ENCODE measurements at regions of chr5 and their contacts with region 1.

Region 1: GRCh38 chr5:150075871-150076288 is 10.5 kb downstream of the CSF1R start:
- DNase-seq: no peak
- CTCF ChIP-seq: no peak

Region 2: DNA sequence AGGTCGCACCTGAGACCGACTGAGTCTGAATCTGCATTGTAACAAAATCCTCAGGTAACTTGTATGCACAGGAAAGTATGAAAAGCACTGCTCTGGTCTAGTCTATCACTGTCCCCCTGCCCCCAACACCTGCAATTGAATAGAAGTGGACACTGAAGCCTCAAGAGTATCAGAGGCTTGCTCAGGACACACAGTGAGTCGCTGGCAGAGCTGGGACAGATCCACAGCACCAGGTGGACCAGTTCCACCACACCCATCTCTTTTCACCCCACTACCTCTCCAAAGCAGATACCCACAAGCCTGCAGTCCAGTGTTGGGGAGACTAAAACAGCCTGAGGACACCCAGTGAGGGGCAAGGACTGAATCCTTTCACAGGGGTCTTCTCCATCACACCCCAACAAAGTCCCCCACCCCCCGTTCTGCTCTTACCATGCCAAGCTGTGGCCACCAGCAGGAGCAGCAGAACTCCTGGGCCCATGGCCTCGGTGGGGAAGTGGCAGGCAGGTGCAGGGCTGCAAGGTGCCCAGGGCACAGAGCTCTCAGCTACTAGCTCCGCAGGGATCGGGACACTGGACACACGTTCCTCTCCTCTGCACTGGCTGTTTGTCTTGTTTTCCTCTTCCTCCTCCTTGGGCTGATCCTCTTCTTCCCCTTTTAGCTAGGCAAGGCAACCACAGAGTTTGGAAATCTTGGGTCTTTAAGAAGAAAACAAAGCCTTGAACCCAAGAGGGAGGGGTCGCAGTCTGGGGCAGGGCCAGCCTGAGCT is 10.3 kb after region 1 on chr5 and contains the start of gene CSF1R:
- CTCF ChIA-PET with region 1: interaction called, 10 read pairs
- POLR2A ChIA-PET with region 1: no interaction called
- DNase-seq: no peak
- CTCF ChIP-seq: no peak